Activated naive CD4-positive, alpha-beta T cell treated with anti-CD3 and anti-CD28 coated beads for 36 hours (primary cell): ENCODE measurements at regions of chr10 and their contacts with region 1.

Region 1: DNA sequence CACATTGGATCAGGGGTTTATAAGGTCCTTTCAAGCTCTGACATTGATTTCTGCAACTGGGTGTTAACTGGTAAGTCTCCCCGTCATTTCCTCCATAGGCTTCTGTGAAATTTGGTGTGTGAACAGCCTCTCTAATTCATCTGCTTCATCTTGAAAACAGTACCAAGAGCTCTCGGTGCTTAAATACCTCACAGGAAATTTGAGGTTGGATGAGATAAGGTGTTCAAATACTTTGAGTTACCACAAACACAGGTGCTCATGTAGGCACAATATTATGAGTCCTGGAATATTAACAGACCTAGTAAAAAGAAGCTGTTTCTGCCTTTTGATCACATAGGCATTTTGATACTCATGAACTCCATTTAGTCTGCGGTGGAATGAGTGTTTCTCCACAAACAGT is 85.2 kb downstream of the RTKN2 start:
- DNase-seq: peak; percentile 68
- H3K4me3 Mint-ChIP-seq: no peak overlapping the region
- H3K27ac Mint-ChIP-seq: peak overlapping the region; percentile 99
- H3K4me1 Mint-ChIP-seq: peaks cover 88% of the 10 kb centered on the region
- H3K27me3 Mint-ChIP-seq: no peaks in the 10 kb centered on the region

Region 2: GRCh38 chr10:61903221-61903927 is 280.1 kb before region 1 on chr10:
- CTCF ChIA-PET with region 1: interaction called, 4 read pairs
- intact Hi-C with region 1: loop called (anchors 1 kb)
- DNase-seq: peak; percentile 74
- H3K4me3 Mint-ChIP-seq: peak overlapping the region; percentile 99
- H3K27ac Mint-ChIP-seq: peak overlapping the region; percentile 100
- H3K4me1 Mint-ChIP-seq: peaks cover 42% of the 10 kb centered on the region
- H3K27me3 Mint-ChIP-seq: no peaks in the 10 kb centered on the region

Region 3: GRCh38 chr10:62019013-62019684 is 164.3 kb before region 1 on chr10:
- CTCF ChIA-PET with region 1: interaction called, 3 read pairs
- intact Hi-C with region 1: loop called (anchors 1 kb)
- DNase-seq: no peak
- H3K4me3 Mint-ChIP-seq: peak overlapping the region; percentile 39
- H3K27ac Mint-ChIP-seq: peak overlapping the region; percentile 99
- H3K4me1 Mint-ChIP-seq: peaks cover 90% of the 10 kb centered on the region
- H3K27me3 Mint-ChIP-seq: no peaks in the 10 kb centered on the region

Region 4: GRCh38 chr10:62149621-62150020 is 33.8 kb before region 1 on chr10:
- CTCF ChIA-PET with region 1: no interaction called
- intact Hi-C with region 1: loop called (anchors 1 kb)
- DNase-seq: no peak
- H3K4me3 Mint-ChIP-seq: no peak overlapping the region
- H3K27ac Mint-ChIP-seq: no peak overlapping the region
- H3K4me1 Mint-ChIP-seq: peaks cover 14% of the 10 kb centered on the region
- H3K27me3 Mint-ChIP-seq: no peaks in the 10 kb centered on the region

Region 5: DNA sequence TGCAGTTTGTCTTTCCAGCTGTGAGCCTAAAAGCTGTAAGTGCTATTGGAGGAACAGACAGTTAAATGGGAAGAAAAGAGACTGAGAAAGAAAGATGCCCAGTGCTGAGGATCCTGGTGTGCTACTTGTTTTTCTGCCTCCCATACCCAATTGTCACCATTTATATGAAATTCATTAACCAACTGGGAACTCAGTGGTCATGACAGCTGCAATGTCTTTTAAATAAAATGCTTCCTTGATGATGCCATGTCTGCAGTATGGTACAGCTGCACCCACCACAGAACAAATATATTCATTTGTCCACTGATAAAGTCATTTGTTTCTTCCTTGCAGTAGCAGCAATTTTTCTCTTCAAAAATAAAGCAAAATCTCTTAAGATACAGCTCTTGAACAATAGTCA is 100.8 kb after region 1 on chr10:
- CTCF ChIA-PET with region 1: no interaction called
- intact Hi-C with region 1: no loop called
- DNase-seq: no peak
- H3K4me3 Mint-ChIP-seq: no peak overlapping the region
- H3K27ac Mint-ChIP-seq: no peak overlapping the region
- H3K4me1 Mint-ChIP-seq: no peaks in the 10 kb centered on the region
- H3K27me3 Mint-ChIP-seq: no peaks in the 10 kb centered on the region

Region 6: GRCh38 chr10:62426086-62426485 is 242.6 kb after region 1 on chr10:
- CTCF ChIA-PET with region 1: no interaction called
- intact Hi-C with region 1: loop called (anchors 1 kb)
- DNase-seq: peak; percentile 64
- H3K4me3 Mint-ChIP-seq: no peak overlapping the region
- H3K27ac Mint-ChIP-seq: peak overlapping the region; percentile 12
- H3K4me1 Mint-ChIP-seq: peaks cover 28% of the 10 kb centered on the region
- H3K27me3 Mint-ChIP-seq: no peaks in the 10 kb centered on the region

Region 7: DNA sequence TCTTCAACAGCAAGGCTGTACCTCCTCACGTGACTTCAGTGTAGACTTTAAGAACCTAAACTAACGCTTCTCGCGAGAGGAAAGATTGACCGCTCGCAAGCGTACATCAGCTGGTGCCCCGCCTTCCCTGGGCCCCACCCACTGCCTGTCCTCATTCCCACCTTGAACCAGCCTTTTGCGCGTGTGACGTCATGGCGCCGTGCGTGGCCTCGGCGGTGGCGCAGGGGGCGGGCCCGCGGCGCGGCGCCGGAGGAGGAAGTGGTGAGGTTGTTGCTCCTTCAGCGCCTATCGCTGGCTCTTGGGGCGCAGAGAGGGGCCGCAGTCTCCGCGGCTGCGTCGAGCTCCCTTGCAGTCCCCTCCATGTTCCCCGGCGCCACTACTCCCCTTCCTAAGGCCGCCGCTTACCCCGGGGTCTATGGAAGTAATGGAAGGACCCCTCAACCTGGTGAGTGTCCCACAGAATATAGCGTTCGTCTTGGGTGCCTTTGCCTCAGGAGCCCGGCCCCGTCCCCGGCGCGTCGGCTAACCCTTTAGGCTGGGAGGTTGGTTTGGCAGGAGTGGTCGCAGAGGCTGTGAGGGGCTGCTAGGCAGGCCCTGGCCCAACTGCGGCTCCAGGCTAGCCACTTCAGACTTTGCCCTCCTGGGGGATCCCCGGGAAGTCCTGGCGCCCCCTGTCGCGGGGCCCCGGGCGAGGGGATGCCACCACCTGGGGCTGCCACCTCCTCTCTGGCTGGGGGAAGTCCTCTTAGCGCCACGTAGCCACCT is 949.8 kb after region 1 on chr10 and contains the start of gene NRBF2:
- CTCF ChIA-PET with region 1: no interaction called
- intact Hi-C with region 1: loop called (anchors 5 kb)
- DNase-seq: peak; percentile 98
- H3K4me3 Mint-ChIP-seq: peak within 1 kb of the TSS; percentile 89
- H3K27ac Mint-ChIP-seq: peak within 1 kb of the TSS; percentile 92
- H3K4me1 Mint-ChIP-seq: peaks cover 38% of the 10 kb centered on the region
- H3K27me3 Mint-ChIP-seq: no peaks in the 10 kb centered on the region
- total RNA-seq, gene NRBF2: 15.4 to 15.6 TPM